Stomach (tissue), 19 donors: ENCODE measurements at regions of chr4 and their contacts with region 1.

Region 1: DNA sequence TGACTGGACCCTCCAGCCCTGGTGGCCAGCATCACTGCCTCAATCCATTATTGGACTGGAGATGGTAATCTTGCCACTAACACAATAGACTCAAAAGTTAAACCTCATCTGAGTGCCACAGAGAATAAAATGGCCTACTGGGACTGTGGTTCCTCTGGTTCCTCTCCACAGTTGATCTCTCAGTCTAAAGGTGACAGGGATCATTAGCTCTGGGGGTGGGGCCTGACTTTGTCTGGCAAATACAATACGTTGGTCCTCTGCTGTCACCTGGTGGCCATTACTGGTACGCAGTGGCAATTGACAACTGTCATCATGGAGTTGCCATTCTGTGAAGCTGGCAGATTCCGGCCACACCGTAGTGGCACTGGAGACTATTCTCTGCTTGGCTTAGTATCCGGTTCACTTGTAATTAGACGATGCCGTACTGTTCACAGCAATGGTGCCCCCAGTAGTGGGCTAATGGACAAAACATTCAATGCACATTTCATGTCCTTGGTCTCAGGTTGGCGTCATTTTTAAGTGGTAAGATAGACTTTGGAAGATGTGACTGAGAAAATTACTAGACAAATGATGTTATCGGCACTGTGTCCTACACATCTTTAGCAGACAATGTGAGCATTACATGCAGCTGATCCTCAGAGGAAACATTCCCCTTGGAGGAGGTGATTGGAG is 6.7 kb downstream of the FGFBP2 start:
- DNase-seq: peak; percentile 84 to 88
- H3K4me3 ChIP-seq: no peak overlapping the region
- H3K27ac ChIP-seq: no peak overlapping the region
- H3K4me1 ChIP-seq: peaks cover 0 to 6% (median 0%) of the 10 kb centered on the region in 4 donors
- H3K27me3 ChIP-seq: no peaks in the 10 kb centered on the region
- CTCF ChIP-seq: peak in 5 of 7 experiments; percentile 58 to 98 (median 90)
- EP300 ChIP-seq: no peak
- POLR2A ChIP-seq: no peak

Region 2: GRCh38 chr4:15805583-15806517 is 150.5 kb before region 1 on chr4:
- intact Hi-C with region 1: loop called (anchors 10 kb)
- DNase-seq: peak; percentile 31 to 79
- H3K4me3 ChIP-seq: no peak overlapping the region
- H3K27ac ChIP-seq: no peak overlapping the region
- H3K4me1 ChIP-seq: no peaks in the 10 kb centered on the region
- H3K27me3 ChIP-seq: no peaks in the 10 kb centered on the region
- CTCF ChIP-seq: peak in 5 of 7 experiments; percentile 47 to 65 (median 56)
- EP300 ChIP-seq: no peak
- POLR2A ChIP-seq: no peak